RWPE1 (cell line): ENCODE measurements at regions of chr9 and their contacts with region 1.

Region 1: DNA sequence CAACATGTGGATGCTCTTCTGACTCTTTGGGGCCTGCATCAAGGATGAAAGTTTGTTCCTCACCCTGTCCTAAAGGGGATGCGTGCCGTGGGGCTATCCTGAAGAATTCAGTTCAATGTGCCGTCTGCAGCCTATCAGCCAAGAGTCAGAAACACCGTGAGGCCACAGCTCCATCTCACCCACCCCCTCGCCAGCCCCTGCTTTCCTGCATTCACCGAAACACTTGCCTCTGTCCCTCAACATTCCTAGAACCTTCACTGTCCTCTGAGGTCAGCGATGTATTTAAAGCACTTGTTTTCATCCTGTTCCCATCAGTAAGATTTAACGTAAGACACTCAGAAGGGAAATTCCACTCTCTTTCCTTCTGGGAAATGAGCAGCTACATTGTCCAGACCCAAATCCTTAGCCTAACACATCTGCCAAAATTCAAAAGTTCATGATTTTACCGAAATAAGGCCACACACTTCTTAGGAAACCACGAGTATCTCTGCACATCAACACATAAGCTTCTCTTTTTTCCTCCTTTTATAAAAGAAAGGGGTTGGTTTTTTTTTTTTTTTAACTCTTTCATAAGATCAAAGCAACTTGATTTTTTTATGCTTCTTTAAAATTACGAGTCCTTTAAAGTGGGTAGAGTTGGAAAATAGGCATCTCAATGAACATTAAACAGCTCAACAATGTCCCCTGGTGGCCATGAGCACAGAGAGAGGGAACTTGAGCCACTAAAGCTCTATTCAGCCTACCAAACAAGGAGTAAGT is 100.7 kb downstream of the SUSD1 start:
- DNase-seq: peak; percentile 78
- H3K27ac ChIP-seq: peak overlapping the region; percentile 7; the same call in 1 of the 2 replicates
- CTCF ChIP-seq: peak; percentile 100

Region 2: DNA sequence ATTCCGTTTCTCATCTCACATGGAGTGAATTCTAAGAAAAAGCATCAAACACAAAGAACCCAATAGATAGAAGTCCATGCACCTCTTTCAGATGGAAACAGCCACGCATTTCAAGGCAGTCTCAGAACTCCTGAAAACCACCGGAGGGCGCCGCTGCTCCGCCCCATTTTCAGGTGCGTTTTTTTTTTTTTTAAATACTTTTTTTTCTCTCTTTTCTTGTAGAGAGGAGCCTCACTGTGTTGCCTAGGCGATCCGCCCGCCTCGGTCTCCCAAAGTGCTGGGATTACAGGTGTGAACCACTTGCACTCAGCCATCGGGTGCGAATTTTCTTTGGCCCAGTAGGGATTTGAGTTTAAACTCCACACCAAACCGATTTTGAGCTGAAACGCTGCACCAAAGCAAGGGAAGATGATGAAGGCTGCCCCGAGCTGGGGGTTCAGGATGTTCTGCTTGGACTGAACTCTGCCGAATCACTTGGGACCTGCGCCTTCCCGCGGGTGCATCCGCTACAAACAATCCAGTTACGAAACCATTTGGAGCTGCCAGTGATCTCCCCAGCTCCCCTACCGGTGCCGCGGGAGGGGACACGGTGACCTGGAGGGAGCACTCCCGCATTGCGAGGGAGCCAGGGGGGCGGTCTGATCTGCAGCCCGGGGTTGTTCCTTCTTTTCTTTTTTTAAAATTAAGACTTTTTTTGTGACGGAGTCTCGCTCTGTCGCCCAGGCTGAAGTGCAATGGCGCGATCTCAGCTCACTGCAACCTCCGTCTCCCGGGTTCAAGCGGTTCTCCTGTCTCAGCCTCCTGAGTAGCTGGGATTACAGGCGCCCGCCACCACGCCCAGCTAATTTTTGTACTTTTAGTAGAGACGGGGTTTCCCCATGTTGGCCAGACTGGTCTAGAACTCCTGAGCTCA is 476.4 kb before region 1 on chr9:
- CTCF ChIA-PET with region 1: interaction called, 10 read pairs
- POLR2A ChIA-PET with region 1: no interaction called
- DNase-seq: peak; percentile 79
- H3K27ac ChIP-seq: peak overlapping the region; percentile 87
- CTCF ChIP-seq: peak; percentile 99

Region 3: DNA sequence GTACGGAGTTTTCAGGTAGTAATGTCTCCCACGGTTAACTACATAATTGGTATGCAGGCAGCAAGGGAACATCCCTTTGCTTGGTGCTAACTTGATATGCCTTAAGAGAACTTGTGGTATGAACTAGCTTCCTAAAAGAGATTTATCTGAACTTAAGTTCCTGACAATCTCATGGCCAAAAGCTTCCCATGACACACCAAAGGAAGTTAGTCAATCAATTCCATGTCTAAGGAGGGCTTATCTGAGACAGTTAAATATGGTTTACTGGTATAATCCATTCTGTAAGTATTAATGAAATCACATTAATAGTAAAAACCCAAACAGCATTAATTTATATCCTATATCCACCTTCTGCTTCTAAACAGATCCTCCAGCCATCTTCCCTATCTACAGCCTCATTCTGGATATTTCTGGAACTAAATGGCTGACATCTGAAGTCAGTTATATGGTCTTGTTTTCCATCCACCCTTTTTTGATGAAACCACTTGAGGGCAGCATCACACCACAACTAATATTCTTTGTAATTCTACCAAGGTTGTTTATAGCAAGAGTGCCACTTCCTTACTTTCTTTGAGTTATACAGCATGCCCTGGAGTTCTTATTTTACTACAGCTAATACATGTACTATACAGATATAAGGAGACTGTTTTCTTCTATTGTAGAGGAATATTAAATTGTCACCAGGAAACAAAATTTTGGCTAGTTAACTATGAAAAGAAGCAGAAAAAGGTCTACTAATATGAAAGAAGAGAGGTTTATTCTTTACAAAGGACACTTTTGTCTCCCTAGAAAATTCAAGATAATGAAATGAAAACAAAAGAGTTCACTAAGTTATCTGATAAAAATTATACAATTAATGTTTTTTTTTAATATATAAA is 314.4 kb before region 1 on chr9:
- CTCF ChIA-PET with region 1: interaction called, 69 read pairs
- POLR2A ChIA-PET with region 1: no interaction called
- DNase-seq: peak; percentile 71
- H3K27ac ChIP-seq: no peak overlapping the region
- CTCF ChIP-seq: peak; percentile 91

Region 4: GRCh38 chr9:111766066-111766465 is 308.4 kb before region 1 on chr9:
- CTCF ChIA-PET with region 1: interaction called, 69 read pairs
- POLR2A ChIA-PET with region 1: no interaction called
- DNase-seq: no peak
- H3K27ac ChIP-seq: no peak overlapping the region
- CTCF ChIP-seq: no peak

Region 5: GRCh38 chr9:111891910-111892499 is 182.4 kb before region 1 on chr9:
- CTCF ChIA-PET with region 1: interaction called, 12 read pairs
- POLR2A ChIA-PET with region 1: no interaction called
- DNase-seq: peak; percentile 75
- H3K27ac ChIP-seq: no peak overlapping the region
- CTCF ChIP-seq: no peak

Region 6: GRCh38 chr9:112086627-112087026 is 12.2 kb after region 1 on chr9:
- CTCF ChIA-PET with region 1: interaction called, 16 read pairs
- POLR2A ChIA-PET with region 1: no interaction called
- DNase-seq: peak; percentile 43
- H3K27ac ChIP-seq: no peak overlapping the region
- CTCF ChIP-seq: peak; percentile 60